Thyroid gland (tissue), 4 donors: ENCODE measurements at regions of chr9 and their contacts with region 1.

Region 1: GRCh38 chr9:125241000-125241862 is at the start of gene HSPA5:
- DNase-seq: peak; percentile 100
- H3K4me3 ChIP-seq: peak within 1 kb of the TSS; percentile 99 to 100 (median 100)
- H3K27ac ChIP-seq: peak within 1 kb of the TSS; percentile 90 to 98 (median 94)
- H3K4me1 ChIP-seq: peaks cover 31 to 39% of the 10 kb centered on the region in 2 donors
- H3K27me3 ChIP-seq: no peaks in the 10 kb centered on the region
- CTCF ChIP-seq: no peak
- POLR2A ChIP-seq: peak; percentile 92 to 99
- total RNA-seq, gene HSPA5: 202 to 921 (median 592) TPM

Region 2: DNA sequence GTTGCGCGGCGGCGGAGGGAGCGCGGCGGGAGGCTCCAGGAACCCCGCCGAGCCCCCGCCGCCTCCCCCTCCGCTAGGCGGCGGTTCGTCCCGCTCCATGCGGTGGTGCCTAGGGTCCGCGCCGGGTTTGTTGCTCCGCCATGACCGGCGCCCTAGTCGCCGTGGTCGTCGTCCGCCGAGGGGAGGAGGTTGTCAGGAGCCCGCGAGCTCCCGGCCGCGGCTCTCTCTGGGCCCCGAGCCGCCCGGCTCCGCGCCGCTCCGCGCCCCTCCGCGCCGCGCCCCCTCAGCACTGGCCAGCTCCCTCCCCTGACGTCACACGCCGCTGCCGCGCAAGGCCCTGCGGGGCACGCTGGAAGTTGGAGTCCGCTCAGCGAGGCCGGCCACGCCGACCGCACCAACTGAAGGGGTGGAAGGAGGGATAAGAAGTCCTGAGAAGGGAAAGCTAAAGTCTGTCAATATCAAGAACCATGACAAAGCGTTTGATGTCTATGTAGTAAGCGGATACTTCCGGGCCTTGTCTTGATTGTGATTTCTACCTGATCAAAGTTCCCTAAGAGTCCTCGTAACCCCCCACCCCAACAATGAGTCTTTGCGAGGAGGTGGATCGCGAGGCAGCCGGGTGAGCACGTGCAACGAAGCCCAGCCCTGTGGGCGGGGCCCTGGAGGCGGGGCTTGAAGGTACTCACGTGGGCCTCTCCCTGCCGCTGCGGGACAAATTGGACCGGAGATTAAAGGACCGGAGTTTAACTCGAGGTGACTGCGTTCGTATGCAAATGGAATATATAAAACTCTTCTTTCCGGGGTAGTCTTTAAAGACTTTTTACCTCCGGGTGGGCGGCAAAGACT is 470.0 kb before region 1 on chr9 and contains the start of gene NR6A1:
- intact Hi-C with region 1: loop called (anchors 10 kb)
- DNase-seq: peak; percentile 98 to 99
- H3K4me3 ChIP-seq: peak within 1 kb of the TSS; percentile 46 to 72 (median 67)
- H3K27ac ChIP-seq: peak within 1 kb of the TSS; percentile 73 to 91 (median 86)
- H3K4me1 ChIP-seq: peaks cover 18 to 27% of the 10 kb centered on the region in 2 donors
- H3K27me3 ChIP-seq: no peaks in the 10 kb centered on the region
- CTCF ChIP-seq: peak in 3 of 6 experiments; percentile 26 to 38 (median 33)
- POLR2A ChIP-seq: peak; percentile 61 to 98
- total RNA-seq, gene NR6A1: 15.3 to 25.0 (median 19.3) TPM

Region 3: DNA sequence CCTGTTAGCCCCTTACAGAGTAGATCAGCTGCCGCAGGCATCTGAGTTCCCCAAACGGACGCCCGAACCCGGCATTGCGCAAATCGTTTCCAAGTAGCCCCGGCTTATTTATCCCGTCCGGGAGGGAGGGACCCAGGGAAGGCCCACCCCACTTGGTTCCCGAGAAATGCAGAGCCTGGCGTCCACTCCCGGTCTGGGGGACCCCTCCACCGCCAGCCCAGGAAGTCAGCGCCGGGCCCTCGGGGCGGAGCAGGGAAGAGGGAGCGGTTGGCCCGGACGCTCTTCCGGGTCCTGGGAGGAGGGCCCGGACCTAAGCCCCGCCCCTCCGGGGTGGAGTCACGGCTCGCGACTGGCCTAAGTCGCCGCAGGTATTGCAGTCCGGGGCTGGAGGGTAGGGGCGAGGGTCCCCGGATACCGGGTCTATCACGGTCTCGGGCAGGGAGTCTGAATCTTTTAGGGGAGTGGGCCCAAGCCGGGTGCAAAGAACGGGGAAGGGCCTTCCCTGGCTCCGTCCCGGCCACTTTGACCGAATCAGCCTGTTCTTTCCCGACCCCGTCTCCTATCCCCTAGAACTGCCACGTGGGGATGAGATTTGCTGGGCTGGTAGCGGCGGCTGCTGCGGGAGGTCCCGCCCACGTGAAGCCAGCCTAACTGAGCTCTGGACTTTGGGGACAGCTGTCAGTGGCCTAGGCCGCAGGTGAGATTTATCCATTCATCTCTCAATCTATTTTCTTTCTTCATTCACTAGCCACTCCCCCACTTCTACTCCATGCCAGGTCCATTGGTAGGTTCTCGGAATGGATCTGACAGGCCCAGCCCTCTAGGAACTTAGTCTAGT is 40.8 kb before region 1 on chr9 and contains the start of gene RABEPK:
- intact Hi-C with region 1: loop called (anchors 5 kb)
- DNase-seq: peak; percentile 93 to 95
- H3K4me3 ChIP-seq: peak within 1 kb of the TSS; percentile 24 to 75 (median 47)
- H3K27ac ChIP-seq: peak within 1 kb of the TSS; percentile 82 to 95 (median 83)
- H3K4me1 ChIP-seq: peaks cover 5 to 10% of the 10 kb centered on the region in 2 donors
- H3K27me3 ChIP-seq: no peaks in the 10 kb centered on the region
- CTCF ChIP-seq: no peak
- POLR2A ChIP-seq: peak in 1 of 2 donors; percentile 91
- total RNA-seq, gene RABEPK: 11.0 to 17.3 (median 15.4) TPM